Mammary epithelial cell (primary cell): ENCODE measurements at regions of chr20 and their contacts with region 1.

Region 1: GRCh38 chr20:14744723-14745122 is 407.3 kb upstream of the FLRT3 start:
- DNase-seq: no peak
- H3K4me3 ChIP-seq: no peak overlapping the region
- H3K27ac ChIP-seq: no peak overlapping the region
- H3K4me1 ChIP-seq: no peaks in the 10 kb centered on the region
- H3K27me3 ChIP-seq: no peaks in the 10 kb centered on the region
- CTCF ChIP-seq: no peak

Region 2: GRCh38 chr20:14647016-14647415 is 97.7 kb before region 1 on chr20:
- CTCF ChIA-PET with region 1: no interaction called
- dilution Hi-C with region 1: no loop called
- in situ Hi-C with region 1: no loop called
- intact Hi-C with region 1: no loop called
- DNase-seq: no peak
- H3K4me3 ChIP-seq: no peak overlapping the region
- H3K27ac ChIP-seq: no peak overlapping the region
- H3K4me1 ChIP-seq: no peaks in the 10 kb centered on the region
- H3K27me3 ChIP-seq: no peaks in the 10 kb centered on the region
- CTCF ChIP-seq: no peak

Region 3: DNA sequence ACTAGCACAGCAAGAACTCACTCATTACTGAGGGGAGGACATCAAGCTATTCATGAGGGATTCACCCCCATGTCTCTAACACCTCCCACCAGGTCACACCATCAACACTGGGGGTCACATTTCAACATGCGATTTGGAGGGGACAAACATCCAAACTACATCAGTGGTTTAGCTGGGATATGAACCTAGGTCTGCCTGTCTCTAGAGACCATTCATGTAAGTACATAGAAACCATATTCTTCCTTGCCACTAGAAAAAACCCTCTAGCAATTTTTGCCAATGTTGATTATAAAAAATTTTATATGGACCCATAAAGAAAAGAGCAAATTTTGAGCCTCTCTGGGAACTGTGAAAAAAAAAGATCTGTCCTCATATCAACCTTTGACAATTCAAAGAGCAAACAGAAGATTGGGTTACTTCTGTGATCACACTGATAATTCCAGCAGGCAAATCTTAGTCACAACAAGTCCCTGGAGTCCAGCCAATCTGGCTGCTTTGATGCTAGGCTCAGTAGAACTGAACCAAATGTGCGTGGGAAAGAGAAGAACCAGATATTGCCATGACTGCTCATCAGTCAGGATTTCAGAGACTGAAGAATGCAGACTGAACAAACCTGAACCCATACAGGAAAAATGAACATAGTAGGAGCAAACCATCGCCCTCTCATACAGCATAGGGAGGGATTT is 30.9 kb after region 1 on chr20:
- CTCF ChIA-PET with region 1: no interaction called
- dilution Hi-C with region 1: loop called (anchors 5 kb)
- in situ Hi-C with region 1: no loop called
- intact Hi-C with region 1: no loop called
- DNase-seq: peak; percentile 91
- H3K4me3 ChIP-seq: no peak overlapping the region
- H3K27ac ChIP-seq: no peak overlapping the region
- H3K4me1 ChIP-seq: peaks cover 9% of the 10 kb centered on the region
- H3K27me3 ChIP-seq: no peaks in the 10 kb centered on the region
- CTCF ChIP-seq: no peak